ENCODE measurements at regions of chr3 and their contacts with region 1.

Region 1: GRCh38 chr3:66971891-66972551 is 26.1 kb upstream of the KBTBD8 start:
- DNase-seq: peak; percentile 84
- ATAC-seq: peak; percentile 97
- H3K4me3 ChIP-seq: peak overlapping the region; percentile 28 to 69 (median 55)
- H3K4me3 Mint-ChIP-seq: peak overlapping the region; percentile 86
- H3K27ac ChIP-seq: peak overlapping the region; percentile 31 to 46
- H3K27ac Mint-ChIP-seq: peak overlapping the region; percentile 87
- H3K4me1 ChIP-seq: peaks cover 11 to 13% of the 10 kb centered on the region in 2 donors
- H3K4me1 Mint-ChIP-seq: peaks cover 15% of the 10 kb centered on the region
- H3K27me3 ChIP-seq: no peaks in the 10 kb centered on the region
- H3K27me3 Mint-ChIP-seq: no peaks in the 10 kb centered on the region
- CTCF ChIP-seq: peak; percentile 87

Region 2: DNA sequence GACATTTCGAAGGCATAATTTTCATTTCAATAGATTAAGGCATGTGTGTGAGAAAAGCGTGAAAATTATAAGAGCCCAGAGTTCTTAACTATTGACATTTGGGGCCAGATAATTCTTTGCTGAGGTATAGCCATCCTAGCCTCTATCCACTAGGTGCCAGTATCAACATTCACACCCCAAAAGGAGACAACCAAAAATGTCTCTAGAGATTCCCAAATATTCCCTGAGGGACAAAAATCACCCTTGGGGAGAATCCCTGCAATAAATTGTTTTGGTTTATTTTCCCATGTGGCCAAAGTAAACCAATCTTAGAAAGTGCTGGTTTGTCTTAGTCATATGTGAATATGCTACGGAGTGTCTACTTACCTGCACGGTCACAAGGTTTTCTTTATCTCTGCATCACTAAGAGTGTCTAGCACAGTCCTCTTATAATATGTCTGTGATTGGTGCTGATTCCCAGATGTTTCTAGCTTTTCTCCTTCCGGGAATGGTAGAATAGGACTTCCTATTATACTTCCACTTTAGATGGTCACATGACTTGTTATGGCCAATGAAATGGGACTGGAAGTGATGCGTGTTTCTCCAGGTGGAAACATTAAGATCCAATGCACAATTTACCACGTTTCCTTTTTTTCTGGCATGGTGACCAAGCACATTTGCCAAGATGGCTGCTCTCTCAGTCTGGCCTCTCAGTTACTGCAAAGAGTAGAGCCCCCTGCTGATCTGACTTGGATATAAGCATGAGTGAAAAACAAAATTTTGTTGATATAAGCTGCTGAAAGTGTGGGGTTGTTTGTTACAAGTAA is 18.0 kb after region 1 on chr3:
- CTCF ChIA-PET with region 1: interaction called, 112 read pairs
- POLR2A ChIA-PET with region 1: interaction called, 3 read pairs
- intact Hi-C with region 1: loop called (anchors 1 kb)
- DNase-seq: peak; percentile 58
- ATAC-seq: peak; percentile 83
- H3K4me3 ChIP-seq: peak overlapping the region in 4 of 5 experiments; percentile 36 to 61 (median 54)
- H3K4me3 Mint-ChIP-seq: peak overlapping the region; percentile 93
- H3K27ac ChIP-seq: peak overlapping the region in 1 of 2 donors; percentile 37
- H3K27ac Mint-ChIP-seq: peak overlapping the region; percentile 88
- H3K4me1 ChIP-seq: no peaks in the 10 kb centered on the region
- H3K4me1 Mint-ChIP-seq: peaks cover 7% of the 10 kb centered on the region
- H3K27me3 ChIP-seq: no peaks in the 10 kb centered on the region
- H3K27me3 Mint-ChIP-seq: peaks cover 4% of the 10 kb centered on the region
- CTCF ChIP-seq: peak; percentile 63

Region 3: DNA sequence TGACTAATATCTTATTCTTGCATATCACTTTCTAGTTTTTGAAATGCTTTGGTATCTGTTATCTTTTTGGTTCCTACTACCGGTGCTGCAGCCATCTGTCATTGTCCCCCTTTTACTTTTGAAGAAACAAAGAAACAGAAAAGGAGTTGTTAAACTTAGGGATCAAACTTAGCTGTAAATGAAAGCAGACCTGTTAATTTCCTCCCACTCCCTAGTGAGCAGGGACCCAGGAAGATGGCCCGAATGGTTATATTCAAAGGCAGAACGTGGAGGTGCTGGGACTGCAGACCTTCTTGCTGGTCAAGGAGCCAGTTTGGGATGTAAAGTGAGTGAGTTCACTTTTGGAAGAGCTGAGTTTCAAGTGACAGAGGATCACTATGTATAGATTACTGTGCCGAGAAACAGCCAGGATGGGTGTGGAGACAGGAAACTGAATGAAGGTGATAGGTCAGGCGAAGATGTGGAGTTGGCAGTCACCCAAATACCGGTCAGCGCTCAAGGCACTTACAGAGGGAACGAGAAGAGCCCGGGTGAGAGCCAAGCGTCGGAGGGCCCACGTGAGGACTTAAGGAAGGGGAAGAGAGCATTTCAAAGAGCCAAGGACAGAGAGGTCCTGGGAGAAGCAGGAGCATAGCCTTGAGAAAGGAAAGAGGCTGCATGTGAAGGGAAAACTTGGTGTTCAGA is 46.2 kb after region 1 on chr3:
- CTCF ChIA-PET with region 1: interaction called, 13 read pairs
- POLR2A ChIA-PET with region 1: interaction called, 3 read pairs
- intact Hi-C with region 1: no loop called
- DNase-seq: peak; percentile 17
- ATAC-seq: peak; percentile 24
- H3K4me3 ChIP-seq: peak overlapping the region in 1 of 5 experiments; percentile 37
- H3K4me3 Mint-ChIP-seq: peak overlapping the region; percentile 63
- H3K27ac ChIP-seq: peak overlapping the region; percentile 36 to 64
- H3K27ac Mint-ChIP-seq: peak overlapping the region; percentile 70
- H3K4me1 ChIP-seq: peaks cover 43 to 46% of the 10 kb centered on the region in 2 donors
- H3K4me1 Mint-ChIP-seq: peaks cover 54% of the 10 kb centered on the region
- H3K27me3 ChIP-seq: no peaks in the 10 kb centered on the region
- H3K27me3 Mint-ChIP-seq: no peaks in the 10 kb centered on the region
- CTCF ChIP-seq: no peak

Region 4: DNA sequence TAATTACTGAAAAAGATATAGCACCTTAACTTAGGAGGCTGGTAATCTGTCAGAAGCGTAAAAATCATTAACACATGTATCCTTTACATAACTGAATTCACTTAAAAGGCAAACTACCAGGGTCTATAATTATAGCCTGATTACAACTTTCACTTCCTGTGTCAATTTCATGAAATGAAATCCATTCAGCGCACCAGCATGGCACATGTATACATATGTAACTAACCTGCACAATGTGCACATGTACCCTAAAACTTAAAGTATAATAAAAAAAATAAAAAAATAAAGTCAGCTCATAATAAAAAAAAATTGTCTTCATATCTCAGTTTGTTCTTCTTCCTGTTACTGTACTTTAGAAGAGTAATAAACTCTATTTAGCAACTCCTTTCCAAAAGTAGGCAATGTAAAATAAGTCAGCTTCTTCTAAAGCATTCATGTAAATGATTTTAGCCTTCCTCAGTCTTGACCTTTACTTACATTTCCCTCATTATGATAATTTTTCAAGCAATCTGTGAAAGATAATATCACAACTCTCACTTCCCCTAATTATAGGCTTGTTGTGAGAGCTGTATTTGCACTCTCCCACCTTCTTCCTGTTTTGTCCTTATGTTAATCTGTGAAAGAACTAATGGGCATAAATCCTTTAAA is 76.2 kb after region 1 on chr3:
- CTCF ChIA-PET with region 1: interaction called, 62 read pairs
- POLR2A ChIA-PET with region 1: no interaction called
- intact Hi-C with region 1: no loop called
- DNase-seq: peak; percentile 77
- ATAC-seq: peak; percentile 89
- H3K4me3 ChIP-seq: peak overlapping the region in 4 of 5 experiments; percentile 3 to 28 (median 16)
- H3K4me3 Mint-ChIP-seq: peak overlapping the region; percentile 80
- H3K27ac ChIP-seq: peak overlapping the region; percentile 83 to 87
- H3K27ac Mint-ChIP-seq: peak overlapping the region; percentile 84
- H3K4me1 ChIP-seq: peaks cover 40 to 53% of the 10 kb centered on the region in 2 donors
- H3K4me1 Mint-ChIP-seq: peaks cover 44% of the 10 kb centered on the region
- H3K27me3 ChIP-seq: no peaks in the 10 kb centered on the region
- H3K27me3 Mint-ChIP-seq: no peaks in the 10 kb centered on the region
- CTCF ChIP-seq: no peak

Region 5: GRCh38 chr3:67077656-67078055 is 105.6 kb after region 1 on chr3:
- CTCF ChIA-PET with region 1: no interaction called
- POLR2A ChIA-PET with region 1: no interaction called
- intact Hi-C with region 1: no loop called
- DNase-seq: no peak
- ATAC-seq: no peak
- H3K4me3 ChIP-seq: no peak overlapping the region
- H3K4me3 Mint-ChIP-seq: no peak overlapping the region
- H3K27ac ChIP-seq: no peak overlapping the region
- H3K27ac Mint-ChIP-seq: no peak overlapping the region
- H3K4me1 ChIP-seq: peaks cover 6 to 8% of the 10 kb centered on the region in 2 donors
- H3K4me1 Mint-ChIP-seq: peaks cover 22% of the 10 kb centered on the region
- H3K27me3 ChIP-seq: no peaks in the 10 kb centered on the region
- H3K27me3 Mint-ChIP-seq: no peaks in the 10 kb centered on the region
- CTCF ChIP-seq: no peak

Region 6: GRCh38 chr3:67790043-67790442 is 818.0 kb after region 1 on chr3:
- CTCF ChIA-PET with region 1: interaction called, 11 read pairs
- POLR2A ChIA-PET with region 1: no interaction called
- intact Hi-C with region 1: loop called (anchors 5 kb)
- DNase-seq: peak; percentile 60
- ATAC-seq: peak; percentile 58
- H3K4me3 ChIP-seq: no peak overlapping the region
- H3K4me3 Mint-ChIP-seq: no peak overlapping the region
- H3K27ac ChIP-seq: no peak overlapping the region
- H3K27ac Mint-ChIP-seq: no peak overlapping the region
- H3K4me1 ChIP-seq: no peaks in the 10 kb centered on the region
- H3K4me1 Mint-ChIP-seq: no peaks in the 10 kb centered on the region
- H3K27me3 ChIP-seq: no peaks in the 10 kb centered on the region
- H3K27me3 Mint-ChIP-seq: peaks cover 6% of the 10 kb centered on the region
- CTCF ChIP-seq: peak; percentile 73

Region 7: DNA sequence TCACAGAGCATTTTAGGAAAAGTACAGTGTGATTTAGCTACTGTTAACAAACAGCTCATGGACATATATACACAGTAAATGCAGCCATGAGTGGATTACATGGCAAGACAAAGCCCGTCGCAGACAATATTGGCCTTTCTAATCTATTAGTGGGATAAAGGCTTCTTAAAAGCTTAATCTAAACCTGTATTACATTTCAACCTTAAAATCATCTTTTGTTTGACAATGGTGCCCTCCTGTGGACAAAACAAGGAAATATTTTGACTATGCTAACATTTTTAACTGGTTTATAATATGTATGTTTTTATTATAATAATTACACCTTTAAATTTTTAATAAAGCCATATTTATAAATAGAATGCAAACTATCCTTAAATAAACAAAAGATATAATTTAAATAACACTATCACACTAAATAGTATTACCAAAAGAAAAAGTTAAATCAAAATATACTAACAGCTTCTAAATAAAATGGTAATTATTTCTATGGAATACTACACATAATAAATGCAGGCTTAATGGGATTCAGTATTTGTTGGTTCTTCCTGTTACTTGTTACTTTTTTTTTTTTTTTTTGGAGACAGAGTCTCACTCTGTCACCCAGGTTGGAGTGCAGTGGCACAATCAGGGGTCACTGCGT is 1921.7 kb after region 1 on chr3:
- CTCF ChIA-PET with region 1: interaction called, 12 read pairs
- POLR2A ChIA-PET with region 1: no interaction called
- intact Hi-C with region 1: no loop called
- DNase-seq: peak; percentile 45
- ATAC-seq: no peak
- H3K4me3 ChIP-seq: no peak overlapping the region
- H3K4me3 Mint-ChIP-seq: no peak overlapping the region
- H3K27ac ChIP-seq: no peak overlapping the region
- H3K27ac Mint-ChIP-seq: no peak overlapping the region
- H3K4me1 ChIP-seq: no peaks in the 10 kb centered on the region
- H3K4me1 Mint-ChIP-seq: no peaks in the 10 kb centered on the region
- H3K27me3 ChIP-seq: no peaks in the 10 kb centered on the region
- H3K27me3 Mint-ChIP-seq: peaks cover 16% of the 10 kb centered on the region
- CTCF ChIP-seq: peak; percentile 77